Activated naive CD4-positive, alpha-beta T cell treated with anti-CD3 and anti-CD28 coated beads for 36 hours (primary cell): ENCODE measurements at regions of chr17 and their contacts with region 1.

Region 1: GRCh38 chr17:75904749-75905521 is at the start of gene MRPL38:
- DNase-seq: peak; percentile 95
- H3K4me3 Mint-ChIP-seq: peak within 1 kb of the TSS; percentile 83
- H3K27ac Mint-ChIP-seq: peak within 1 kb of the TSS; percentile 75
- H3K4me1 Mint-ChIP-seq: peaks cover 22% of the 10 kb centered on the region
- H3K27me3 Mint-ChIP-seq: no peaks in the 10 kb centered on the region
- total RNA-seq, gene MRPL38: 109 to 117 TPM

Region 2: DNA sequence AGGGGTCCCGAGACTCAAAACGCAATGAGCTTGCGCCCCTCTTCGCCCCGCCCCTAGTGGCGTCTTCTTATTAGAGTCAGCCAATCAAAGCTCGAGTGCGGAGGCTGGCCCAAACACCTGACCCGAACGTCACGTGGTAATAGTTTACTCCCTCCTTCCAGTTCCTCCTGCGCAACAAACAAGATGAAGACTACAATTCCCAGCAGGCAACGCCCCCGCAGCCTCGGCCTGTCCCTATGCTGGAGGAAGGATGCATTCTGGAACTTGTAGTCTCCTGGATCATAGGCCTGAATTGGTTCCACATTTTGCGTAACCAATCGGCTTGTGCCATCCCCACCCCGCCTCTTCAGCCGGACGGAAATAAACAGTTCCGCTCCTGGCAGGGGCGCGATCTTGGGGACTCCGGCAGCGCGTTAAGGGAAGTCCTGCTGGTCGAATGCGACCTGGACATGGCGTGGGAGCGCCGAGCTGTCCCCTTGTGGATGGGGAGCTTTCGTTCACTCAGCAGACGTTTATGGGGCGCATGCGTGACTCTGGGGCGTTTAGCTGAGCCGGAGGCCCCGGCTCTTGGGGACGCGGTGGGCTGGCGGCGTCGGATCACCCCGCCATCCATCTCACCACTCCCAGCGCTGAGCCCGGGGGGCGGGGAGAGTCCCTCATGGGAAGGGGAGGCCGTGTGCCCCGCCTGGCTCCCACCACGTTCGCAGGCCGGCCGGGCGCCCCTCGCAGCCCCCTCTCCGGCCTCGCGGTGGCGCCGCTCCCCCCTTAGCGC is 49.4 kb before region 1 on chr17 and contains the start of gene WBP2:
- CTCF ChIA-PET with region 1: interaction called, 3 read pairs
- intact Hi-C with region 1: loop called (anchors 1 kb)
- DNase-seq: peak; percentile 99
- H3K4me3 Mint-ChIP-seq: no peak within 1 kb of the TSS
- H3K27ac Mint-ChIP-seq: peak within 1 kb of the TSS; percentile 74
- H3K4me1 Mint-ChIP-seq: peaks cover 39% of the 10 kb centered on the region
- H3K27me3 Mint-ChIP-seq: no peaks in the 10 kb centered on the region
- total RNA-seq, gene WBP2: 65.0 to 68.7 TPM

Region 3: GRCh38 chr17:75978938-75979704 is 74.2 kb after region 1 on chr17 and contains the starts of genes ACOX1 and TEN1:
- CTCF ChIA-PET with region 1: no interaction called
- intact Hi-C with region 1: loop called (anchors 1 kb)
- DNase-seq: peak; percentile 98
- H3K4me3 Mint-ChIP-seq: peak within 1 kb of the TSS; percentile 99
- H3K27ac Mint-ChIP-seq: peak within 1 kb of the TSS; percentile 100
- H3K4me1 Mint-ChIP-seq: peaks cover 30% of the 10 kb centered on the region
- H3K27me3 Mint-ChIP-seq: no peaks in the 10 kb centered on the region
- total RNA-seq, gene ACOX1: 31.4 to 34.9 TPM
- total RNA-seq, gene TEN1: 9.7 to 12.2 TPM

Region 4: DNA sequence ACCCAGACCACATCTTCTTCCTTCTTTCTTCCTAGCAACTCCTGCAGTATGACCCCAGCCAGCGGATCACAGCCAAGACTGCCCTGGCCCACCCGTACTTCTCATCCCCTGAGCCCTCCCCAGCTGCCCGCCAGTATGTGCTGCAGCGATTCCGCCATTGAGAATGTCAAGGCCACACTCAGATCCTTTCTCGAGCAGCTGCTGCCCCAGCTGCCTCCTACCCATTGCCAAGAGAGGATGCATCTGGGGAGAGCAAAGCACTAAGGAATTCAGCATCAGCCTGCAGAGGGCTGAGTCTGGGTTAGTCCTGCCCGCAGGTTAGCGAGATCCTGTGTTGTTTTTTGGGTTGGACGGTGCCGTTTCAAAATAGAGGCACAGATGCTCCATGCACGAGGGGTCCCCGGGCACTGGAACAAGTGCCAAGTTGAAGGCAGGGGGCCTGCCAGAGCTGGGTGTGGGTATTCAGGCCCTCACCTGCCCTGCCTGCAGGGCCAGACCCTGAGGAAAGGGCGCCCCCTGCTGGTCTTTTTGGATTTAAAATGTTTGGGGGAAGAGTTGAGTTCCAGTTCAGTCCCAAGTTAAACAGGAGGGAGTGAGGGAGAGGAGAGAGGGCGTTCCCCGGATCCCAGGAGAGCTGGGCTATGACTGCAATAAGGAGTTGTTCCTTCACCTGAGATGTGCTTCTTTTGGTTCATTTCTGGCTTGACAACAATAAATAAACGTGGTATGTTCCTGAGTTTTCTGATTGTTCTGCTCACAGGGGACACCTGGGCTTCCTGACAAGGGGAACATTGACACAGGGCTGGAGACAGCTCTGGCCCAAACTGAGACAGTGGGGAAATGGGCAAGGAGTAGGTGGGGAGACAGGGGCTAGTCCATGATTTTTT is 100.6 kb after region 1 on chr17:
- CTCF ChIA-PET with region 1: interaction called, 85 read pairs
- intact Hi-C with region 1: loop called (anchors 1 kb)
- DNase-seq: peak; percentile 95
- H3K4me3 Mint-ChIP-seq: no peak overlapping the region
- H3K27ac Mint-ChIP-seq: no peak overlapping the region
- H3K4me1 Mint-ChIP-seq: no peaks in the 10 kb centered on the region
- H3K27me3 Mint-ChIP-seq: no peaks in the 10 kb centered on the region

Region 5: DNA sequence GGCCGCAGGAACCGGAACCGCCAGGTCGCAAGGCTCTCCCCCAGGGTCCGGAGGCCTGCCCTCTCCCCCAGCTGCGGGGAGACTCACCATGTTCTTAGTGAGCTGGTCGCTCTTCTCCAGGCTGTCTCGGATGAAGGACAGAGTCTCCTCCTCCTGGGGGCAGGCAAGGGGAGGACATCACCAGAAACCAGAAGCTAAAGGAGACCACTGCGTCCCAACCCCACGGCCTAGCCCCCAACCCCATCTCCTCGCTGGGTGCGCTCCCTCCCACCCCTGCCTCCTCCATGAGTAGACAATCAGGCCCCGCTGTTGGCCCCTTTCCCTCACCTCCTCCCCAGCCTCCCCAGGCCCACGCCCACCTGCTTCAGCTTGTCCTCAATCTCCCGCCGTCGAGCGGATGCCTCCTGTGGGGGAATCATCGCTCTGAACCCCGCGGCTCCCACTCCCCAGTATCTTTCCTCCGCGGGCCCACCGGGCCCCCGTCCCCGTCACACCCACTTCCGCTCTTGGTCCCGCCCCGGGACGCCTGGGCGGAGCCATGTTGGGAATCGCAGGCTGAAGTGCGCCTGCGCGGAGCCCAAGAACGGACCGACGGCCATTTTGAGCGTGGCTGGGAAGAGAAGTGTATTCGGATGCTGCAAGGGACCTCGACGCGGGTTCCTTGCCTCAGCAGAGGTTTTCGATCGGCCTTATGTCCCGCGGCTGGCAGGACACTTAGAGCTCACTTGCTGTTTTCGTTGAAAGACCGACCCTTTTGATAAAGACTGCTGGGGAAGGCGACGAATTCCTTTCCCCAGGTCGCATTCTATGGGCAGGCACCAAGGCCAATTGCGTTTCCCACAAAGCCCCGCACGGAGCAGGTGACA is 198.6 kb after region 1 on chr17 and contains the start of gene EXOC7:
- CTCF ChIA-PET with region 1: no interaction called
- intact Hi-C with region 1: loop called (anchors 2 kb)
- DNase-seq: peak; percentile 95
- H3K4me3 Mint-ChIP-seq: peak within 1 kb of the TSS; percentile 94
- H3K27ac Mint-ChIP-seq: peak within 1 kb of the TSS; percentile 92
- H3K4me1 Mint-ChIP-seq: peaks cover 19% of the 10 kb centered on the region
- H3K27me3 Mint-ChIP-seq: no peaks in the 10 kb centered on the region
- total RNA-seq, gene EXOC7: 43.5 to 46.6 TPM

Region 6: GRCh38 chr17:76213491-76213890 is 308.6 kb after region 1 on chr17:
- CTCF ChIA-PET with region 1: no interaction called
- intact Hi-C with region 1: no loop called
- DNase-seq: no peak
- H3K4me3 Mint-ChIP-seq: no peak overlapping the region
- H3K27ac Mint-ChIP-seq: no peak overlapping the region
- H3K4me1 Mint-ChIP-seq: peaks cover 65% of the 10 kb centered on the region
- H3K27me3 Mint-ChIP-seq: no peaks in the 10 kb centered on the region

Region 7: DNA sequence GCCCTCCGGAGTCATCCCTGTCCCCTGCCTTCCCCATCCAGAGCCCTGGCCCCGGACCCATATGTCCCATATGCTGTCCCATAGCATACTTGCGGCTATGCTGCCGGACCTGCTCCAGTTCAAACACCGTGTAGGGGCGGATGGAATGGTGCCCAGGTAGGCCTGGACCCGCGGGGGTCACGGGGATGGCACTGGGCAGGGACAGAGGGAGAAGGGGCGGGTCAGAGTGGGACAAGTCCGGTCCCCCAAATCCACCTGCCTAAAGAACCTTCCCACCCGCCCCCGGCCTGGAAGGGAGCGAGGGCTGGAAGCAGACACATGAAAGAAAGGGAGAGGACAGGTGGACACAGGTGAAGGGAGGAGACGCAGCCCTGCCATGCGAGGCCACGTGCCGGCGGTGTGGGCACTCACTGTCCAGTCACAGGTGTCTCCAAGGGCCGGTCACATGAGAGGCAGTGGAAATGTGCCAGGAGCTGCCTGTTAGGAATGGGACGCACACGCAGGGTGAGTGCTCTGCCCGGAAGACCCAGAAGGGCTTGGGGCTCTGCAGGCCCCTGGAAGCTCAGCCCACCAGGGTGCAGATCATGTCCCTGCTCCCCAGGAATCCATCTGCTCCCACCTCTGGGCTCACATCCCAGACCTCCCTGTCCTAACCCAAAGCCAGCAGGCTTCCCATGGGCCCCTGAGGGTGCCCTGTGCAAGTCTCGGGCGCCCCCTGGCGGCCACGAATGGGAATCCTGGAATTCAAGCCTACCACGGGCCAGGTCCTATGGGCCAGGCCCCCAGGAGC is 374.2 kb after region 1 on chr17:
- CTCF ChIA-PET with region 1: interaction called, 3 read pairs
- intact Hi-C with region 1: loop called (anchors 1 kb)
- DNase-seq: peak; percentile 91
- H3K4me3 Mint-ChIP-seq: no peak overlapping the region
- H3K27ac Mint-ChIP-seq: no peak overlapping the region
- H3K4me1 Mint-ChIP-seq: peaks cover 28% of the 10 kb centered on the region
- H3K27me3 Mint-ChIP-seq: no peaks in the 10 kb centered on the region